Activated CD8-positive, alpha-beta T cell treated with anti-CD3 and anti-CD28 coated beads, Interleukin-2, amount 10 ng/mL, durations not matched to agents 7 days and 5 days (primary cell): ENCODE measurements at regions of chr18 and their contacts with region 1.

Region 1: GRCh38 chr18:23918401-23919032 is 96.0 kb upstream of the TTC39C start:
- DNase-seq: peak; percentile 89
- ATAC-seq: peak; percentile 90
- H3K4me3 Mint-ChIP-seq: no peak overlapping the region
- H3K27ac Mint-ChIP-seq: no peak overlapping the region
- H3K4me1 Mint-ChIP-seq: peaks cover 36% of the 10 kb centered on the region
- H3K27me3 Mint-ChIP-seq: peaks cover 17% of the 10 kb centered on the region

Region 2: GRCh38 chr18:23605938-23606337 is 312.6 kb before region 1 on chr18:
- CTCF ChIA-PET with region 1: no interaction called
- POLR2A ChIA-PET with region 1: no interaction called
- DNase-seq: no peak
- ATAC-seq: no peak
- H3K4me3 Mint-ChIP-seq: no peak overlapping the region
- H3K27ac Mint-ChIP-seq: no peak overlapping the region
- H3K4me1 Mint-ChIP-seq: no peaks in the 10 kb centered on the region
- H3K27me3 Mint-ChIP-seq: peaks cover 5% of the 10 kb centered on the region

Region 3: DNA sequence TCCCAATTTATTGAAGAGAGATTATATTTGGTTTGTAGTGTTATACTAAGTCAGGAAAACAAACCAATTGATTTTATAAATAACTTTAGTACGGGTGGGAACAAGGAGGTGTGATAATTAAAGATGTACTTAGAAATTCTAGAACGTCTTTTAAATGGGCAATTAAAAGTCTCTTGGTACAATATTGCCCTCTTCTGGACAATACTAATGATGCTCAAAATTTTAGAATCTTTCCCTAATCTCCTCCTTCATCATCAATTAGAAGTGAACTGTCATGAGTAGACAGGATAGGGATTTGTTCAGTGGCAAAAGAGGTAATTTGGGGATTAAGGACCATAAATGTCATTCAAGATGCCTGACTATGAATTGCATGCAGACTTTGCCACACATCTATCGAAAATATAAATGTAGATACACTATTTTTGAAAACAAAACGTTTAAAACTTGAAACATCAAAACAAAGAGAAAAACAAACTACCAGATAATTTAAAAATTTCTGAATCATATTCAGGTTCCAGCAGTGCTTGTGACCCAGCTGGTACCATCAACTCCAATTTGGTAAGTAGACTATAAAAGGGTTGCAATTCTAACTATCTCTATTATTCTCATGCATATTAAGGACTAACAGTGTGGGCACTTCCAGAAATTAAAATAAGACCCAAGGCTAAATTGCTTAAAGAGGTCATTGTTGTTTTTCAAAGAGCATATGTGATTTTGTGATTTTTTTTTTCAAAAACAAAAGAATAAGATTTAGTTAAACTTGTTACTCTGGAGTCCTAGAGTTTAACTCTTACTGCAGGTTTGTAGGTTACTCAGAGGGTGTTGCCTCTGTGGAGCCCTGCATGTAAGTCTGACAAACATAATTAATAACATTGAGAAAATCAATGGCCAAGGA is 105.7 kb before region 1 on chr18:
- CTCF ChIA-PET with region 1: interaction called, 20 read pairs
- POLR2A ChIA-PET with region 1: no interaction called
- DNase-seq: no peak
- ATAC-seq: no peak
- H3K4me3 Mint-ChIP-seq: no peak overlapping the region
- H3K27ac Mint-ChIP-seq: no peak overlapping the region
- H3K4me1 Mint-ChIP-seq: peaks cover 34% of the 10 kb centered on the region
- H3K27me3 Mint-ChIP-seq: peaks cover 20% of the 10 kb centered on the region

Region 4: GRCh38 chr18:23861805-23862470 is 56.6 kb before region 1 on chr18:
- CTCF ChIA-PET with region 1: interaction called, 10 read pairs
- POLR2A ChIA-PET with region 1: interaction called, 4 read pairs
- DNase-seq: no peak
- ATAC-seq: no peak
- H3K4me3 Mint-ChIP-seq: no peak overlapping the region
- H3K27ac Mint-ChIP-seq: peak overlapping the region; percentile 79
- H3K4me1 Mint-ChIP-seq: peaks cover 63% of the 10 kb centered on the region
- H3K27me3 Mint-ChIP-seq: no peaks in the 10 kb centered on the region

Region 5: GRCh38 chr18:23900994-23901393 is 17.5 kb before region 1 on chr18:
- CTCF ChIA-PET with region 1: interaction called, 17 read pairs
- POLR2A ChIA-PET with region 1: no interaction called
- DNase-seq: peak; percentile 28
- ATAC-seq: peak; percentile 51
- H3K4me3 Mint-ChIP-seq: no peak overlapping the region
- H3K27ac Mint-ChIP-seq: no peak overlapping the region
- H3K4me1 Mint-ChIP-seq: peaks cover 8% of the 10 kb centered on the region
- H3K27me3 Mint-ChIP-seq: peaks cover 11% of the 10 kb centered on the region

Region 6: GRCh38 chr18:23998811-23999210 is 80.3 kb after region 1 on chr18:
- CTCF ChIA-PET with region 1: interaction called, 10 read pairs
- POLR2A ChIA-PET with region 1: no interaction called
- DNase-seq: no peak
- ATAC-seq: no peak
- H3K4me3 Mint-ChIP-seq: no peak overlapping the region
- H3K27ac Mint-ChIP-seq: no peak overlapping the region
- H3K4me1 Mint-ChIP-seq: peaks cover 63% of the 10 kb centered on the region
- H3K27me3 Mint-ChIP-seq: no peaks in the 10 kb centered on the region

Region 7: GRCh38 chr18:24118750-24119577 is 200.4 kb after region 1 on chr18:
- CTCF ChIA-PET with region 1: interaction called, 17 read pairs
- POLR2A ChIA-PET with region 1: no interaction called
- DNase-seq: peak; percentile 87
- ATAC-seq: peak; percentile 71
- H3K4me3 Mint-ChIP-seq: no peak overlapping the region
- H3K27ac Mint-ChIP-seq: no peak overlapping the region
- H3K4me1 Mint-ChIP-seq: peaks cover 27% of the 10 kb centered on the region
- H3K27me3 Mint-ChIP-seq: no peaks in the 10 kb centered on the region